ENCODE measurements at regions of chr1 and their contacts with region 1.

Region 1: DNA sequence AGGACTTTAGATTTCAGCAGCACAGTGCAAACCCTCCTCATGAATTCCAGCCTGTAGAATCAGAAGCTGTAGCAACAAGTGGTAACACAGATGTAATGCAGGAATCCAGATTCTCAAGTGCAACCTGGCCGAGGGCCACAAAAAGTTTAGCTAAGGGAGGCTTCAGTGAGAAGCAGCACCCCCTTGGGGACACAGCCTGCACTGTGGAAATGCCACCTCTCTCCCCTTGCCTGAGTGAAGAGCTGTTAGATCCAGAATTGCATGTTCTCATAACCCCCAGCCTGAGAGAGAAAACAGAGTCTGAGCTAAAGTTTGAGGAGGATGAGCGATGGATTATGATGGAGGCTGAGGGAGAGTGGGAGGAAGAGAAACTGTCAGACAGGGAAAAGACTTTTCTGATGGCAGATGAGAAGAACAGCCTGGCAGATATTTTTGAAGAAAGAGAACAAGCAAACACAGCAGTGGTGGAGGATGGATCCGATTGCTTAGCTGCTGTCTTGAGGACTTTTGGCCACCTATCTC is 80.5 kb upstream of the BMP8A start:
- DNase-seq: peak; percentile 88 to 91
- ATAC-seq: peak; percentile 47
- H3K4me3 ChIP-seq: peak overlapping the region; percentile 37 to 55
- H3K27ac ChIP-seq: peak overlapping the region; percentile 7 to 78
- H3K4me1 ChIP-seq: peaks cover 4 to 9% of the 10 kb centered on the region in 2 donors
- H3K27me3 ChIP-seq: no peaks in the 10 kb centered on the region

Region 2: GRCh38 chr1:39305555-39305954 is 105.4 kb before region 1 on chr1:
- intact Hi-C with region 1: no loop called
- DNase-seq: no peak
- ATAC-seq: no peak
- H3K4me3 ChIP-seq: no peak overlapping the region
- H3K27ac ChIP-seq: no peak overlapping the region
- H3K4me1 ChIP-seq: no peaks in the 10 kb centered on the region
- H3K27me3 ChIP-seq: no peaks in the 10 kb centered on the region

Region 3: DNA sequence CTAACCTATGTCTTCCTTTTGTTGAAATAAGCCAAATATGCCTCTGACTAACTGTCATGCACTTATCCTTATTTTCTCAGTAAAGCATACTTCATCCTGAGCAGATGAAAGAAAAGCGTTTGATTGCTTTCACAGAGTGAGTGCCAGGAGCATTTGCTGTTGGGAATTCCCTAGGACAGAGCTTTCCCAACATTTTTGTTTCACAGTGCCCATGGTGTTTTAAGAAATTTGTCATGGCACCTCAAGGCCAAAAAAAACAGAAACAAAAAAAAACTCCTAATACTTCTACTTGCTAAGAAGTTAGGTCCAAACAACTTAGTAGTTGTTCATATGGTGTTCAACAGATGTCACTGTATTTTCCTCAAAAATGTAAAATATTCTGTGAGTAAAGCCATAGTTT is 40.4 kb before region 1 on chr1:
- intact Hi-C with region 1: loop called (anchors 2 to 5 kb)
- DNase-seq: no peak
- ATAC-seq: peak; percentile 74
- H3K4me3 ChIP-seq: no peak overlapping the region
- H3K27ac ChIP-seq: peak overlapping the region; percentile 89 to 99
- H3K4me1 ChIP-seq: peaks cover 0 to 2% of the 10 kb centered on the region in 2 donors
- H3K27me3 ChIP-seq: no peaks in the 10 kb centered on the region

Measured in aorta (tissue), 5 donors.